ENCODE measurements at regions of chr4 and their contacts with region 1.

Region 1: DNA sequence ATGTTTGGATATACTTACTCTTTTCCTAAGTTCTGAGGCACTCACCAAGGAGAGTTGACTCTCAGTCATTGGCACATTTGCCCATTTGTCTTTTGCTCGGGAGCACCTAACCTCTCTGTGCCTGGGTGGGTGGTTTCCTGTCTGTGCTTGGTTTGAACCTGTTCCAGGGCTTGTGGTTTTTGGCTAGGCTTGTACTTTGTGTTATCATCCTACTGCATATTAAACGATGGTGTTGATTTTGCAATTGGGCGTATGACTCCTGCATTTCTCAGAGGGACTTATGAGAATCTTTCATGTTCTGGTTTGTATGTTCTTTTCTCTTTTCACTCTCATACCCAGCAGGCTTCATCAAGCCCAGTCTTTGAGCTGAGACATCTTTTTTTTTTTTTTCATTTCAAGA is 161.7 kb downstream of the BTC start:
- DNase-seq: peak; percentile 96
- H3K4me3 ChIP-seq: no peak overlapping the region
- CTCF ChIP-seq: no peak

Region 2: DNA sequence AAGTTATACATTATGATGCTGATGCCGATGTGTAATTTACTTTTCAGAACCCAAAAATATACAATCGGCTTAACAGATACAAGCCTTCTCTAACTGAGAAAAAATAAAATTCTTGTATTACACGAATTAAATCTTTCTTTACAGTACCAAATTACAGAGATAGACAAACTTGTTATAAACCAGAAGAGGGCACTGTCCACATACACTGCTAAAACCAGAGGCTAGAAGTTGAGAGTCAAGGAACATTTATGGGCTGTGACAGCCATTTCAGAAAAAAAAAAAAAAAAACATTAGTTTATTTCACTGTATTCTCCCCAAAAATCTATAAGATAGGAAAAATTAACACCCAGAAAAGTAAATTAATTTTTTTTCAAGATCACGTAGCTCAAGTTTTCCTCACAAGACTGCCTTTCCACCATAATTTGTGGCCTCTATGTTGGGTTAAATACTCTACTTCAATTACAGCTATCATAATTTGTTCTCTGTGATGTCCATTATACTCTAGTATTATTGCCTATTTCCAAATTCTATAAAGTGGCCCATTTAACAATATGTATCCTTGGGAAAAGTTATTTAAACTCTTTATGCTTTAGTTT is 255.6 kb before region 1 on chr4:
- in situ Hi-C with region 1: loop called (anchors 25 kb)
- DNase-seq: peak; percentile 56
- H3K4me3 ChIP-seq: no peak overlapping the region
- CTCF ChIP-seq: peak; percentile 56

Region 3: DNA sequence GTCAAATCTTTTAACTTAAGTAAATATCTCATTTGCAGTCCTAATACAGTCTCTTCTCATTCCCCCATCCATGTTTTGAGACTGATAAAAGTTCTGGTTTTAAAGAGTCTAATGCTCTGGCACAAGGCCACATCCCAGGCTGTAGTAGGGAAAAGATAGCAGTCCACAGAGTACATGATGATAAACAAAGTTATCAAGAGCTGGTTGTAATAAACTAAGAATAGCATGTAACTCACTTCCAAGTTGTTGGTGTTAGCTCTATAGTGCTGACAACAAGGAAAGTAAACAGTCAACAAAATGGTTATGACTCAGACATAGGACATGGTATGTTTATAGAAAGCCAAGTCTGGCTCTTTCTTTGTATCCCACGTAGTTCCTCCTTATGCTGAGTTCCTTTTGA is 209.5 kb before region 1 on chr4:
- in situ Hi-C with region 1: no loop called
- DNase-seq: no peak
- H3K4me3 ChIP-seq: no peak overlapping the region
- CTCF ChIP-seq: no peak